ENCODE measurements at regions of chr17 and their contacts with region 1.

Region 1: GRCh38 chr17:1908699-1909309 is 79.0 kb downstream of the RPA1 start:
- DNase-seq: peak; percentile 57
- H3K4me3 ChIP-seq: peak overlapping the region in 1 of 4 donors; percentile 31
- H3K27ac ChIP-seq: no peak overlapping the region
- H3K4me1 ChIP-seq: peaks cover 7 to 28% (median 12%) of the 10 kb centered on the region in 4 donors
- H3K27me3 ChIP-seq: peaks cover 100% of the 10 kb centered on the region
- CTCF ChIP-seq: peak; percentile 53 to 71 (median 63)
- EP300 ChIP-seq: no peak
- POLR2A ChIP-seq: no peak

Region 2: DNA sequence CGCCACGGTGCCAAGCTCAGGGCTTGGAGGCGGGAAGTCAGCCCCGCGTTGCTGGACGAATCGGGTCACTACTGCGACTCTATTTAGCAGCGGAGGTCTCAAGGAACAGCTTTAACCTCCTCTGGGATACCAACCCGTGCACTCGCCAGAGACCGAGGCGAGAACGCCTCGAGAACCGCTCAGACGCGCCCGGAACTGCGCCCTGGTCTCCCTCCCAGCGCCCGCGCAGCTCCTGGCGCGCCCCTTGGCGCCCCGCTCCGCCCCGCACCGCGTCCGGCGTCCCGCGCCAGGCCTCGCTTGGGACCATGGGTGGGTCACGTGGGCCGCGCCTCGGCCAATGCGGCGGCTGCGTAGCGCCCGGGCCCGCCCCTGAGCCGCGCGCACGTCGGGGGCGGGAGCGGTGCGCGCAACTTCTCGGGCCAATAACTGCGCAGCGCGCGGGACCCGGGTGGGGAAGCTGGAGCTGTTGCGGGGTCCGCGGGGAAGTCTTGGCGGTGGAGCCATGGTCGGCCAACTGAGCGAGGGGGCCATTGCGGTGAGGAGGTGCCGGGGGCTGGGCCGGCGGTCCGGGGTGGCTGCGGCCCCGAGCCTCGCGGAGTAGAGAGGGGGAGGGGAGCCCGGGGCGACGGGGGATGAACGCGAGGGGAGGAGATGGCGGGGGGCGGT is 79.1 kb before region 1 on chr17 and contains the starts of genes RPA1 and SMYD4:
- in situ Hi-C with region 1: no loop called
- intact Hi-C with region 1: no loop called
- DNase-seq: peak; percentile 91
- H3K4me3 ChIP-seq: peak within 1 kb of the TSS; percentile 74 to 98 (median 88)
- H3K27ac ChIP-seq: peak within 1 kb of the TSS; percentile 88 to 92 (median 90)
- H3K4me1 ChIP-seq: peaks cover 0 to 23% (median 19%) of the 10 kb centered on the region in 4 donors
- H3K27me3 ChIP-seq: no peaks in the 10 kb centered on the region
- CTCF ChIP-seq: no peak
- EP300 ChIP-seq: no peak
- POLR2A ChIP-seq: peak; percentile 78
- total RNA-seq, gene RPA1: 6.4 to 160 (median 23.9) TPM
- total RNA-seq, gene SMYD4: 4.1 to 14.8 (median 9.0) TPM

Region 3: DNA sequence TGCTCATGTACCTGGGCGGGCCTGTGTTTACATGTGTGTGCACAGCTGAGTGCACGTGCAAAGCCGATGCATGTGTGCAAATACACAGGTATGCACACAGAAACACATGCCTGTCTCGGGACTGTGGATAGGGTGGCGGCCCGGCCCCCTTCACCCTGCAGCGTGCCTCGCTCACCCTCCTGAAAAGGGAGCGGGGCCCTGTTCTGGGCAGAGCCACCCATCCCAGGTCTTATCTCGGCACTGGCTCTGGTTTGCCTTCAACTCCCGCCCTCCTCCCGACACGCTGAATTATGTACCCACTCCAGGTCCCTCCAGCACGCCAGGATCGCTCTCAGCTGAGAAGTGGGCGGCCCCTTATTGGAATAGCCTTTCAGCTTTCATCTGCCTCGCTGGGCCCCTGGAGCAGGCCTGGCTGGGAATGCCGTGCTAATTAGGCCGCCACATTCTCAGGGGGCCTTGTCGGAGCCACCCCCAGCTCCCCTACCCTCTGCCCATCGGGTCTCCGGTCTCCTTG is 38.5 kb after region 1 on chr17:
- in situ Hi-C with region 1: no loop called
- intact Hi-C with region 1: no loop called
- DNase-seq: no peak
- H3K4me3 ChIP-seq: no peak overlapping the region
- H3K27ac ChIP-seq: no peak overlapping the region
- H3K4me1 ChIP-seq: no peaks in the 10 kb centered on the region
- H3K27me3 ChIP-seq: no peaks in the 10 kb centered on the region
- CTCF ChIP-seq: no peak
- EP300 ChIP-seq: no peak
- POLR2A ChIP-seq: no peak

Region 4: GRCh38 chr17:2011411-2012371 is 102.9 kb after region 1 on chr17:
- in situ Hi-C with region 1: loop called in 3 of 4 experiments (anchors 10 kb)
- intact Hi-C with region 1: no loop called
- DNase-seq: peak; percentile 68
- H3K4me3 ChIP-seq: no peak overlapping the region
- H3K27ac ChIP-seq: peak overlapping the region; percentile 5 to 38 (median 25)
- H3K4me1 ChIP-seq: peaks cover 0 to 19% (median 10%) of the 10 kb centered on the region in 4 donors
- H3K27me3 ChIP-seq: no peaks in the 10 kb centered on the region
- CTCF ChIP-seq: no peak
- EP300 ChIP-seq: no peak
- POLR2A ChIP-seq: no peak

Region 5: GRCh38 chr17:2029911-2030778 is 121.3 kb after region 1 on chr17 and contains the start of gene DPH1:
- in situ Hi-C with region 1: loop called in 1 of 4 experiments (anchors 10 kb)
- intact Hi-C with region 1: loop called (anchors 2 kb)
- DNase-seq: peak; percentile 89
- H3K4me3 ChIP-seq: peak within 1 kb of the TSS; percentile 71 to 91 (median 82)
- H3K27ac ChIP-seq: peak within 1 kb of the TSS; percentile 62 to 86 (median 76)
- H3K4me1 ChIP-seq: peaks cover 15 to 32% (median 23%) of the 10 kb centered on the region in 4 donors
- H3K27me3 ChIP-seq: peaks cover 43% of the 10 kb centered on the region
- CTCF ChIP-seq: no peak
- EP300 ChIP-seq: no peak
- POLR2A ChIP-seq: no peak
- total RNA-seq, gene DPH1: 32.4 to 88.8 (median 58.9) TPM

Region 6: GRCh38 chr17:3762922-3763776 is 1854.3 kb after region 1 on chr17:
- in situ Hi-C with region 1: no loop called
- intact Hi-C with region 1: no loop called
- DNase-seq: no peak
- H3K4me3 ChIP-seq: no peak overlapping the region
- H3K27ac ChIP-seq: peak overlapping the region in 2 of 4 donors; percentile 0 to 13
- H3K4me1 ChIP-seq: peaks cover 0 to 2% (median 0%) of the 10 kb centered on the region in 4 donors
- H3K27me3 ChIP-seq: no peaks in the 10 kb centered on the region
- CTCF ChIP-seq: no peak
- EP300 ChIP-seq: no peak
- POLR2A ChIP-seq: no peak

Measured in transverse colon (tissue), 4 donors.